ENCODE measurements at regions of chr5 and their contacts with region 1.

Region 1: DNA sequence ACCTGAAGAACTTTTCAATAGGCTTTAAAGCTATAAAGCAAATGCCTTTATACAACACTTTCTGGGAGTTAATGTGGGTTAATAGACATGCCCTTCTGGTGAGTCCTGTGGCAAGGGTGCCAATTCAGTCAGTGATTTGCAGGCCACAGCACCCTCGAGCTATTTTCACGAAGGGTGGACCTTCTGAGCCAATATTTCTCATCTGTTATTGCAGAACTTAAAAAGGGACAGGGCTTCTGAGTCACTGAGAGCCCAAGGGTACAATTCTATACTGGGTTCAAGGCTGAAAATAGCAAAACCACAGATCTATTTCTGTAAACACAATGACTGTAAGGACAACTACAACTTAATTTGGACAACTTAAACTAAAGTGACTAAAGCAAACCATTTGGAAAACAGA is 92.8 kb downstream of the GABRG2 start:
- DNase-seq: no peak
- ATAC-seq: no peak
- H3K4me3 ChIP-seq: no peak overlapping the region
- H3K4me3 Mint-ChIP-seq: no peak overlapping the region
- H3K27ac ChIP-seq: no peak overlapping the region
- H3K27ac Mint-ChIP-seq: no peak overlapping the region
- H3K4me1 ChIP-seq: no peaks in the 10 kb centered on the region
- H3K4me1 Mint-ChIP-seq: no peaks in the 10 kb centered on the region
- H3K27me3 ChIP-seq: no peaks in the 10 kb centered on the region
- H3K27me3 Mint-ChIP-seq: no peaks in the 10 kb centered on the region

Region 2: DNA sequence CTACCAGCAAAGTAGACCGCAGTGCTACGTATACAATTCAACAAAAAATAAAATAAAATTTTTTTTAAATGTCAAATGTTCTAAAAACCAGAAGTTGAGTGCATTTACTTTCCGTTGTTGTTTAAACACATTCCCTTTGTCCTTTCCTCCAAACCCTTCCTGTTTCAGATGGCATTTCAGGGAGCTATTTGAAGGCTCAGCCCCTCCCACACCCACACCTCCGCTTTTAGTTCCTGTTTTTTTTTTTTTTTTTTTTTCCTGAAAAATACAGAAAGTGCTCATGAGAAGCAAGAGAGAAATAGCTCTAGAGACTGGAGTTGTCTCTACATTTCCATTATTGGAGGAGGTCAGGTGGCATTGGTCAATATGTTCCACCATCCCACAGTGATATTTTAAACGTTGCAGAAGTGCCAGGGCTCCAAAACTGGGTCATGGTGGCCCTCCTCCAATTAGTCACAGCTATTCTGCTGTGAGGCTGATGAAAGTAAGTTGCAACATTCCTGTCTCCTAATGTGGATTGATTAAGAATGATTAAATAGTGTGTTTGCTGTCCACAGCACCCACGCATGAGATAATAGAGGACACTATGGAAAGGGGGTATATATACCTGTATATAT is 14.1 kb after region 1 on chr5:
- CTCF ChIA-PET with region 1: no interaction called
- POLR2A ChIA-PET with region 1: no interaction called
- intact Hi-C with region 1: loop called in 1 of 2 experiments (anchors 1 kb)
- DNase-seq: no peak
- ATAC-seq: no peak
- H3K4me3 ChIP-seq: no peak overlapping the region
- H3K4me3 Mint-ChIP-seq: no peak overlapping the region
- H3K27ac ChIP-seq: no peak overlapping the region
- H3K27ac Mint-ChIP-seq: no peak overlapping the region
- H3K4me1 ChIP-seq: no peaks in the 10 kb centered on the region
- H3K4me1 Mint-ChIP-seq: no peaks in the 10 kb centered on the region
- H3K27me3 ChIP-seq: no peaks in the 10 kb centered on the region
- H3K27me3 Mint-ChIP-seq: no peaks in the 10 kb centered on the region

Measured in naive thymus-derived CD4-positive, alpha-beta T cell (primary cell).